IMR-90 (cell line): ENCODE measurements at regions of chr14 and their contacts with region 1.

Region 1: GRCh38 chr14:61694830-61695694 is at the start of gene HIF1A:
- DNase-seq: peak; percentile 99
- ATAC-seq: peak; percentile 94
- H3K4me3 ChIP-seq: peak within 1 kb of the TSS; percentile 94
- H3K27ac ChIP-seq: peak within 1 kb of the TSS; percentile 90
- H3K4me1 ChIP-seq: no peaks in the 10 kb centered on the region; the same call in none of the 2 replicates
- H3K27me3 ChIP-seq: no peaks in the 10 kb centered on the region
- CTCF ChIP-seq: peak; percentile 30; the same call in 1 of the 2 replicates
- POLR2A ChIP-seq: peak; percentile 97
- RAD21 ChIP-seq: peak; percentile 48
- total RNA-seq, gene HIF1A: 301 and 493 TPM in 2 replicates

Region 2: GRCh38 chr14:61483476-61483875 is 211.6 kb before region 1 on chr14:
- CTCF ChIA-PET with region 1: no interaction called
- POLR2A ChIA-PET with region 1: no interaction called
- dilution Hi-C with region 1: no loop called
- in situ Hi-C with region 1: no loop called
- intact Hi-C with region 1: no loop called
- DNase-seq: no peak
- ATAC-seq: no peak
- H3K4me3 ChIP-seq: no peak overlapping the region
- H3K27ac ChIP-seq: no peak overlapping the region
- H3K4me1 ChIP-seq: peaks cover 16% of the 10 kb centered on the region
- H3K27me3 ChIP-seq: no peaks in the 10 kb centered on the region
- CTCF ChIP-seq: no peak
- POLR2A ChIP-seq: no peak
- RAD21 ChIP-seq: no peak

Region 3: DNA sequence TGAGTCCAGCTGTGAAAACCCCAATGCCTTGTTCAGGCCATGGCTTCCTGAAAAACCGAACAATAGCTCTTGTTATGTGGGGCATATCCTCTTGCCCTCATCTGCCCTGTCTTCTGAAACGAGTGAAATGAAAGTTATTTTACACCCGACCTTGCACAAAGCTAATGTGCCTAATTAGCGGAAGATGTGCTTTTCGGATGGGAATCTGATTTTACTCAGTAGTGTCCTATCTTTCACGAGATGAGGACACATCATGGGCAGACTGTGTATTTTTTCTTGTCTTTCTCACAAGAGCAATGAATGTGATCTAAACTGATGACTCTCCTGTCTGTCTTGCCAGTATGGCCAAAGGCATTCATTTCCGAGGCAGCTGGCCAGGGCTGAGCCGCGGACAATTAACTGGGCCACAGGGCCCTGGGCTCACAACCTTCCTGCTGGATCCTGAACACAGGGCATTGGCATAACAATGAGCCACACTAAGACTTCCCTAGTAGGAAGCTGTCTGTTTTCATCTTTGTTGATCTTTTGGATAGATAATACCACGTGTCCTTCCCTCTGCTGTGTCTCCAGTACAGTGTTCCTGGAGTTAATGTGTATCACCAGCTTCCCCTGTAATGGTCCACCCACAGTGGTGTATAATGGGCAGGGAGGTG is 85.7 kb before region 1 on chr14:
- CTCF ChIA-PET with region 1: interaction called, 4 read pairs
- POLR2A ChIA-PET with region 1: interaction called, 3 read pairs
- dilution Hi-C with region 1: no loop called
- in situ Hi-C with region 1: no loop called
- intact Hi-C with region 1: loop called (anchors 2 kb)
- DNase-seq: peak; percentile 66
- ATAC-seq: peak; percentile 73
- H3K4me3 ChIP-seq: no peak overlapping the region
- H3K27ac ChIP-seq: peak overlapping the region; percentile 85
- H3K4me1 ChIP-seq: peaks cover 28% of the 10 kb centered on the region
- H3K27me3 ChIP-seq: no peaks in the 10 kb centered on the region
- CTCF ChIP-seq: no peak
- POLR2A ChIP-seq: no peak
- RAD21 ChIP-seq: peak; percentile 12; the same call in 1 of the 2 replicates

Region 4: GRCh38 chr14:61620130-61620946 is 74.7 kb before region 1 on chr14:
- CTCF ChIA-PET with region 1: no interaction called
- POLR2A ChIA-PET with region 1: interaction called, 5 read pairs
- dilution Hi-C with region 1: no loop called
- in situ Hi-C with region 1: no loop called
- intact Hi-C with region 1: loop called (anchors 2 kb)
- DNase-seq: peak; percentile 89
- ATAC-seq: peak; percentile 67
- H3K4me3 ChIP-seq: no peak overlapping the region
- H3K27ac ChIP-seq: peak overlapping the region; percentile 79; the same call in 1 of the 2 replicates
- H3K4me1 ChIP-seq: peaks cover 15% of the 10 kb centered on the region
- H3K27me3 ChIP-seq: no peaks in the 10 kb centered on the region
- CTCF ChIP-seq: no peak
- POLR2A ChIP-seq: no peak
- RAD21 ChIP-seq: peak; percentile 6; the same call in 1 of the 2 replicates

Region 5: GRCh38 chr14:61631045-61631687 is 63.9 kb before region 1 on chr14:
- CTCF ChIA-PET with region 1: no interaction called
- POLR2A ChIA-PET with region 1: no interaction called
- dilution Hi-C with region 1: no loop called
- in situ Hi-C with region 1: no loop called
- intact Hi-C with region 1: no loop called
- DNase-seq: no peak
- ATAC-seq: no peak
- H3K4me3 ChIP-seq: no peak overlapping the region
- H3K27ac ChIP-seq: no peak overlapping the region
- H3K4me1 ChIP-seq: peaks cover 3% of the 10 kb centered on the region
- H3K27me3 ChIP-seq: no peaks in the 10 kb centered on the region
- CTCF ChIP-seq: no peak
- POLR2A ChIP-seq: no peak
- RAD21 ChIP-seq: no peak